ENCODE measurements at regions of chr14 and their contacts with region 1.

Region 1: GRCh38 chr14:90331497-90332435 is at the start of gene NRDE2:
- DNase-seq: peak; percentile 92 to 97 (median 93)
- ATAC-seq: peak; percentile 96
- H3K4me3 ChIP-seq: peak within 1 kb of the TSS; percentile 47
- H3K27ac ChIP-seq: peak within 1 kb of the TSS; percentile 67
- H3K4me1 ChIP-seq: peaks cover 0 to 11% of the 10 kb centered on the region in 2 experiments; a peak in 3 of 5 replicates
- H3K27me3 ChIP-seq: no peaks in the 10 kb centered on the region
- CTCF ChIP-seq: no peak
- EP300 ChIP-seq: no peak
- POLR2A ChIP-seq: peak; percentile 79
- RAD21 ChIP-seq: no peak
- polyA plus RNA-seq, gene NRDE2: 3.3 to 5.7 TPM

Region 2: DNA sequence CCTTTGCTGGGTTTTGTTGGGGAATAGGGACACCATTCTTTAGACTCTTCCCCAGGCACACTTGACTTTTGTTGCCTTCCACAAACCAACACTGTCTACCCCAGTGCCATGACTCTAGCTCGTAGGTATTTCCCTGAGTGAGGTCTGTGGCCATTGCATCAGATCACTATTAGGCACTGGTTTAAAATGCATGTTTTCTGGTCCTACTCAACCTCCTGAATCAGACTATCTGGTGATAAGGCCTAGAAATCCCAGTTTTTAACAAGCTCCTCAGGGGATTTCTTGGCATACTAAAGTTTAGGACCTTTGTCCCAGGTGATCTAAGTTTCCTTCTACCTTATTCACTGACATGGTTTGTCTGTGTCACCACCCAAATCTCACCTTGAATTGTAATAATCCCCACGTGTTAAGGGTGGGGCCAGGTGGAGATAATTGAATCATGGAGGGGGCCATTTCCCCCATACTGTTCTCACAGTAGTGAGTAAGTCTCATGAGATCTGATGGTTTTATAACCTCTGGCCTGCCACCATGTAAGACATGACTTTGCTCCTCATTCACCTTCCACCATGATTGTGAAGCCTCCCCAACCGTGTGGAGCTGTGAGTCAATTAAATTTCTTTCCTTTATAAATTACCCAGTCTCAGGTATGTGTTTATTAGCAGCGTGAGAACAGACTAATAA is 163.2 kb before region 1 on chr14:
- CTCF ChIA-PET with region 1: no interaction called
- POLR2A ChIA-PET with region 1: no interaction called
- in situ Hi-C with region 1: no loop called
- intact Hi-C with region 1: no loop called
- DNase-seq: no peak
- ATAC-seq: no peak
- H3K4me3 ChIP-seq: no peak overlapping the region
- H3K27ac ChIP-seq: no peak overlapping the region
- H3K4me1 ChIP-seq: no peaks in the 10 kb centered on the region
- H3K27me3 ChIP-seq: no peaks in the 10 kb centered on the region
- CTCF ChIP-seq: no peak
- EP300 ChIP-seq: no peak
- POLR2A ChIP-seq: no peak
- RAD21 ChIP-seq: no peak

Region 3: DNA sequence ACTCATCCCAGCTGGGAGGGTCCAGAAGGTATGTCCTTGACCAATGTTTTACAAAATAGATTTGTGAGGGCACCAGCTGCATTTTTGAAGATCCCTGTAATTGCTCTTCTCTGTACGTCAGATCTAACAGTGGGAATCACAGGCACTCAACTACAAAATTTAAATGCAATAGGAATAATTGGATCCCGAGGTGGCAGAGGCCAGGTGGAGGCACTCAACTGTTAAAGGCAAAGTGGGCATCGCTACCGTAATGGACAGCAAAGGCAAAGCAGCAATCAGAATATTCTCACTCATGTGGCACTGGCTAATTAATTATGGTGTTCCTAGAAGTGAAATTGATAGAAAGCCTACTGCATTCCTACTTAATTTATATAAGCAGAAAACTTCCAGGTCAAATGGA is 103.3 kb before region 1 on chr14:
- CTCF ChIA-PET with region 1: no interaction called
- POLR2A ChIA-PET with region 1: no interaction called
- in situ Hi-C with region 1: no loop called
- intact Hi-C with region 1: no loop called
- DNase-seq: no peak
- ATAC-seq: no peak
- H3K4me3 ChIP-seq: no peak overlapping the region
- H3K27ac ChIP-seq: no peak overlapping the region
- H3K4me1 ChIP-seq: no peaks in the 10 kb centered on the region
- H3K27me3 ChIP-seq: no peaks in the 10 kb centered on the region
- CTCF ChIP-seq: no peak
- EP300 ChIP-seq: no peak
- POLR2A ChIP-seq: no peak
- RAD21 ChIP-seq: no peak

Region 4: GRCh38 chr14:90361865-90362557 is 30.2 kb after region 1 on chr14:
- CTCF ChIA-PET with region 1: no interaction called
- POLR2A ChIA-PET with region 1: no interaction called
- in situ Hi-C with region 1: no loop called
- intact Hi-C with region 1: no loop called
- DNase-seq: no peak
- ATAC-seq: no peak
- H3K4me3 ChIP-seq: no peak overlapping the region
- H3K27ac ChIP-seq: no peak overlapping the region
- H3K4me1 ChIP-seq: no peaks in the 10 kb centered on the region; a peak in 1 of 5 replicates
- H3K27me3 ChIP-seq: peaks cover 9 to 26% of the 10 kb centered on the region in 2 experiments
- CTCF ChIP-seq: no peak
- EP300 ChIP-seq: no peak
- POLR2A ChIP-seq: no peak
- RAD21 ChIP-seq: no peak

Region 5: DNA sequence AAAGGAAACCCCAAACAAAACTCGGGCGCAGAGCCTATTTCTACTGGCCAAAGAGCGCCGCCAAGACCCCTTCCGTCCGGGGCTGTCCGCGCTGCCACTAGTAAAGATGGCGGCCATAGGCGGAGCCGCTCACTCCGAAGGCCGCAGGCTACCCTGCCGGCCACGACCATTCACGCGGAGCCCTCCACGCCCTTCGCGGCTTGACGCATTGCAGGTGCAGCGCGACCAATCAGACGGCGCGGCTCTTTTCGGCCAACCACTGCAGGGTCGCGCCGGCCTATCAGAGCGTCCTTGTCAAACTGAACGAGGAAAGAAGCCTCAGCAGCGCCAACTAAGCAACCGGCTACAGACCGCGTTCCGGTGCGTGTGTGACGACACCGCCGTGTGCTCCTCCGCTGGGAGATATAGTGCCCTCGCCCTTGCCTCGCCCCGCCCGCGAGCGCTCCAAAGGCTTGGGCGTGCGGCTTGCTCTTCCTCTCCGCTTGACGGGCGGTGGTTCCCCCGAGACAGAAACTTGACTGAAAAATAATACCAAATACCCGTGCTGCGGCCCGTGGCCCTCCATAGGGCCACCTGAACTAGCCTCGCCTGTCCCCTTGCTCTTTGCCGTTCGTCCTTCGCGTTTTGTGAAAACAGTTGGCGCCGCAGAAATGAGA is 51.4 kb after region 1 on chr14:
- CTCF ChIA-PET with region 1: no interaction called
- POLR2A ChIA-PET with region 1: no interaction called
- in situ Hi-C with region 1: no loop called
- intact Hi-C with region 1: loop called (anchors 1 kb)
- DNase-seq: peak; percentile 96 to 98 (median 96)
- ATAC-seq: peak; percentile 93
- H3K4me3 ChIP-seq: peak overlapping the region; percentile 59
- H3K27ac ChIP-seq: peak overlapping the region; percentile 97
- H3K4me1 ChIP-seq: peaks cover 27 to 31% of the 10 kb centered on the region in 2 experiments
- H3K27me3 ChIP-seq: no peaks in the 10 kb centered on the region
- CTCF ChIP-seq: peak in 2 of 3 experiments; percentile 5 to 8; a peak in 1 of 6 replicates
- EP300 ChIP-seq: peak; percentile 12; the same call in 1 of the 2 replicates
- POLR2A ChIP-seq: peak; percentile 89
- RAD21 ChIP-seq: no peak

Region 6: GRCh38 chr14:91193069-91193468 is 861.3 kb after region 1 on chr14:
- CTCF ChIA-PET with region 1: no interaction called
- POLR2A ChIA-PET with region 1: no interaction called
- in situ Hi-C with region 1: no loop called
- intact Hi-C with region 1: no loop called
- DNase-seq: no peak
- ATAC-seq: no peak
- H3K4me3 ChIP-seq: no peak overlapping the region
- H3K27ac ChIP-seq: no peak overlapping the region
- H3K4me1 ChIP-seq: no peaks in the 10 kb centered on the region
- H3K27me3 ChIP-seq: no peaks in the 10 kb centered on the region
- CTCF ChIP-seq: no peak
- EP300 ChIP-seq: no peak
- POLR2A ChIP-seq: no peak
- RAD21 ChIP-seq: no peak